ENCODE measurements at regions of chr2 and their contacts with region 1.

Region 1: GRCh38 chr2:127776122-127776780 is 34.7 kb downstream of the WDR33 start:
- DNase-seq: no peak
- ATAC-seq: peak; percentile 18 to 40
- H3K4me3 ChIP-seq: no peak overlapping the region
- H3K27ac ChIP-seq: no peak overlapping the region
- H3K4me1 ChIP-seq: peaks cover 3% of the 10 kb centered on the region
- H3K27me3 ChIP-seq: no peaks in the 10 kb centered on the region

Region 2: GRCh38 chr2:127061375-127062273 is 714.6 kb before region 1 on chr2:
- intact Hi-C with region 1: no loop called
- DNase-seq: peak in 2 of 3 donors; percentile 52 to 65
- ATAC-seq: peak in 1 of 2 donors; percentile 4
- H3K4me3 ChIP-seq: no peak overlapping the region
- H3K27ac ChIP-seq: no peak overlapping the region
- H3K4me1 ChIP-seq: peaks cover 3% of the 10 kb centered on the region
- H3K27me3 ChIP-seq: no peaks in the 10 kb centered on the region

Region 3: DNA sequence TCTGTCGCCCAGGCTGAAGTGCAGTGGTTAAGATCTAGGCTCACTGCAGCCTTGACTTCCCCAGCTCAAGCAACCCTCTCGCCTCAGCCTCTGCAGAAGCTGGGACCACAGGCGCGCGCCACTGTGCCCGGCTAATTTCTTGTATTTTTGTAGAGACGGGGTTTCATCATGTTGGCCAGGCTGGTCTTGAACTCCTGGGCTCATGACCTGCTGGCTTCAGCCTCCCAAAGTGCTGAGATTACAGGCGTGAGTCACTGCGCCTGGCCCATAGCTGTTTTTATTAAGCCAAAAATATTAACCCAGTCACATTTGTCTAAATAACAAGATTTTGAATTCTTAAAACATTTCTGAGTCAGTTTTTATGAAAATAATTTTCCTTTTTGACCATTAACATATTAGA is 81.3 kb before region 1 on chr2:
- intact Hi-C with region 1: no loop called
- DNase-seq: peak in 2 of 3 donors; percentile 54 to 75
- ATAC-seq: peak; percentile 28 to 62
- H3K4me3 ChIP-seq: no peak overlapping the region
- H3K27ac ChIP-seq: no peak overlapping the region
- H3K4me1 ChIP-seq: no peaks in the 10 kb centered on the region
- H3K27me3 ChIP-seq: no peaks in the 10 kb centered on the region

Region 4: DNA sequence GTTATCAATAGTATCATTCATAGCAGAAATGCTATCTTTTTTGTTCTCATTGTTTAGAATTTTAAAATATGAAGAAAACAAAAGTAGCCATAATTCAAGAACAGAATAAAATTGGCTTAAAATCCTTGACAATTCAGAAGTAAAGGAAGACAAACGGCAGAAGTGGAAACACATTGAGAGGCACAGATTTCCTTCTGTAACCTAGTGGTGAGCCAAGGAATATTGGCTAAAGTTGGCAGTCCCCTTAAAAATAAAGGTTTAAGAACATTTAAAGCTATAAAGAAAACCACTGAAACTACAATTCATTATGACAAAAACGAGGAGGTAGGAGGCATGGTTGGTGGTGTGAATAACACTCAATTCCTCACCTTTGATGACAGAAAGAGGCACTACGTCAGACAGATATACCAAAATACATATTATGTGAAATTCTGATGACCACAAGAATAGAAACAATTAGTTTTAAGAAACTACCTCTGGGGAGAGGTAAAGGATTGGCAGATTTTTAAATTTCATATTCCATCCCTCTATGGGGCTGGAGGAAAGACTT is 32.7 kb before region 1 on chr2:
- intact Hi-C with region 1: loop called in 1 of 4 experiments (anchors 2 kb)
- DNase-seq: no peak
- ATAC-seq: no peak
- H3K4me3 ChIP-seq: no peak overlapping the region
- H3K27ac ChIP-seq: no peak overlapping the region
- H3K4me1 ChIP-seq: no peaks in the 10 kb centered on the region
- H3K27me3 ChIP-seq: no peaks in the 10 kb centered on the region

Region 5: GRCh38 chr2:127763776-127764175 is 12.5 kb before region 1 on chr2:
- intact Hi-C with region 1: no loop called
- DNase-seq: no peak
- ATAC-seq: no peak
- H3K4me3 ChIP-seq: no peak overlapping the region
- H3K27ac ChIP-seq: no peak overlapping the region
- H3K4me1 ChIP-seq: no peaks in the 10 kb centered on the region
- H3K27me3 ChIP-seq: no peaks in the 10 kb centered on the region